T-cell (primary cell): ENCODE measurements at regions of chr6 and their contacts with region 1.

Region 1: GRCh38 chr6:158704181-158704822 is 54.4 kb downstream of the SYTL3 start:
- DNase-seq: peak in 34 of 35 experiments; percentile 33 to 88 (median 69)
- ATAC-seq: peak; percentile 93 to 98 (median 97)
- H3K4me3 ChIP-seq: peak overlapping the region; percentile 48 to 53
- H3K4me3 Mint-ChIP-seq: peak overlapping the region; percentile 72 to 74 (median 73)
- H3K27ac ChIP-seq: peak overlapping the region; percentile 32
- H3K27ac Mint-ChIP-seq: peak overlapping the region; percentile 52 to 72
- H3K4me1 ChIP-seq: peaks cover 0 to 16% of the 10 kb centered on the region in 2 experiments
- H3K4me1 Mint-ChIP-seq: peaks cover 9 to 17% (median 15%) of the 10 kb centered on the region in 3 donors
- H3K27me3 ChIP-seq: no peaks in the 10 kb centered on the region
- H3K27me3 Mint-ChIP-seq: no peaks in the 10 kb centered on the region

Region 2: GRCh38 chr6:158853072-158853871 is 149.0 kb after region 1 on chr6:
- CTCF ChIA-PET with region 1: no interaction called
- POLR2A ChIA-PET with region 1: interaction called in 1 of 2 experiments, 12 read pairs
- DNase-seq: peak; percentile 70 to 92 (median 84)
- ATAC-seq: peak; percentile 78 to 85 (median 80)
- H3K4me3 ChIP-seq: peak overlapping the region; percentile 10 to 52
- H3K4me3 Mint-ChIP-seq: no peak overlapping the region
- H3K27ac ChIP-seq: peak overlapping the region; percentile 98
- H3K27ac Mint-ChIP-seq: no peak overlapping the region
- H3K4me1 ChIP-seq: peaks cover 35 to 63% of the 10 kb centered on the region in 2 experiments
- H3K4me1 Mint-ChIP-seq: peaks cover 35 to 52% (median 49%) of the 10 kb centered on the region in 3 donors
- H3K27me3 ChIP-seq: no peaks in the 10 kb centered on the region
- H3K27me3 Mint-ChIP-seq: no peaks in the 10 kb centered on the region

Region 3: DNA sequence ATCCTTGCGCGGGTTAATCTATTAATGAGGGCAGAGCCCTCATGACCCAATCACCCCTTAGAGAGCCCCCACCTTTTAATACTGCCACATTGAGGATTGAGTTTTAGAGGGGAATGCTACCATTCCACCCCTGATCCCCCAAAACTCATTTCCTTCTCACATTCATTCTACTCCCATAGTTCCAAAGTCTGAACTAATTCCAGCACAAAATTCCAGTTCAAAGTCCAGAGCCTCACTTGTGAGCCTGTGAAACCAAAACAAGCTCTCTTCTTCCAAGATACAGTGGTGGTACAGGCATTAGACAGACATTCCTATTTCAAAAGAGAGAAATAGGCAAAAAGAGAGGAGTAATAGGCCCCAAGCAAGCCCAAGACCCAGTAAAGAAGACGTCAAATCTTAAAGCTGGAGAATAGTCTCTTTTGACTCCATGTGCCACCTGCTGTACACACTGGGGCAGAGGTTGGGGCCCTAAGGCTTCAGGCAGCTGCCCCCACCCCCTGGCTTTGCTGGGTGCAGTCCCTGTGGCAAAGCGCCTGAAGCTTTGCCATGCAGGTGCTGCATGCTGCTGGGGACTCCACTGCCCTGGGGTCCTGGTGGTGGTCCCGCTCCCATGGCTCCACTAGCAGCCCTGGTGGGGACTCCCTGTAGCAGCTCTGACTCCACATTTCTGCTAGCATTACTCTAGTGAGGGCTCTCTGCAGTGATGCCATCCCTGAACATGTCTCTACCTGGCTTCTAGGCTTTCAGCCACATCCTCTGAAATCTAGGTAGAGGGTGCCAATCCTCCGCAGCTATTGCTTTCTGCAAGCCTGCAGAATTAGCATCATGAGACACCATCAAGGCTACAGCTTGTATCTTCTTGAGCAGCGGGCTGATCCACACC is 254.4 kb after region 1 on chr6:
- CTCF ChIA-PET with region 1: no interaction called
- POLR2A ChIA-PET with region 1: interaction called in 1 of 2 experiments, 25 read pairs
- DNase-seq: peak in 17 of 35 experiments; percentile 5 to 42 (median 19)
- ATAC-seq: peak; percentile 50 to 70 (median 60)
- H3K4me3 ChIP-seq: no peak overlapping the region
- H3K4me3 Mint-ChIP-seq: no peak overlapping the region
- H3K27ac ChIP-seq: no peak overlapping the region
- H3K27ac Mint-ChIP-seq: peak overlapping the region in 1 of 2 donors; percentile 6
- H3K4me1 ChIP-seq: no peaks in the 10 kb centered on the region
- H3K4me1 Mint-ChIP-seq: peaks cover 0 to 19% (median 14%) of the 10 kb centered on the region in 3 donors
- H3K27me3 ChIP-seq: no peaks in the 10 kb centered on the region
- H3K27me3 Mint-ChIP-seq: no peaks in the 10 kb centered on the region

Region 4: GRCh38 chr6:158972241-158973233 is 268.2 kb after region 1 on chr6:
- CTCF ChIA-PET with region 1: interaction called, 8 to 24 read pairs
- POLR2A ChIA-PET with region 1: no interaction called
- DNase-seq: peak in 2 of 35 experiments; percentile 7 to 78
- ATAC-seq: peak; percentile 43 to 70 (median 63)
- H3K4me3 ChIP-seq: no peak overlapping the region
- H3K4me3 Mint-ChIP-seq: no peak overlapping the region
- H3K27ac ChIP-seq: no peak overlapping the region
- H3K27ac Mint-ChIP-seq: no peak overlapping the region
- H3K4me1 ChIP-seq: no peaks in the 10 kb centered on the region
- H3K4me1 Mint-ChIP-seq: peaks cover 0 to 2% (median 0%) of the 10 kb centered on the region in 3 donors
- H3K27me3 ChIP-seq: no peaks in the 10 kb centered on the region
- H3K27me3 Mint-ChIP-seq: no peaks in the 10 kb centered on the region